GM12878 (cell line): ENCODE measurements at regions of chr14 and their contacts with region 1.

Region 1: GRCh38 chr14:68401855-68402254 is 391.0 kb downstream of the ZFP36L1 start:
- DNase-seq: peak; percentile 96
- ATAC-seq: peak; percentile 57
- H3K4me3 ChIP-seq: no peak overlapping the region
- H3K27ac ChIP-seq: peak overlapping the region; percentile 100
- H3K4me1 ChIP-seq: peaks cover 66% of the 10 kb centered on the region
- H3K27me3 ChIP-seq: no peaks in the 10 kb centered on the region
- CTCF ChIP-seq: no peak
- EP300 ChIP-seq: peak; percentile 94 to 99
- POLR2A ChIP-seq: no peak
- RAD21 ChIP-seq: peak; percentile 21; the same call in 1 of the 2 replicates

Region 2: DNA sequence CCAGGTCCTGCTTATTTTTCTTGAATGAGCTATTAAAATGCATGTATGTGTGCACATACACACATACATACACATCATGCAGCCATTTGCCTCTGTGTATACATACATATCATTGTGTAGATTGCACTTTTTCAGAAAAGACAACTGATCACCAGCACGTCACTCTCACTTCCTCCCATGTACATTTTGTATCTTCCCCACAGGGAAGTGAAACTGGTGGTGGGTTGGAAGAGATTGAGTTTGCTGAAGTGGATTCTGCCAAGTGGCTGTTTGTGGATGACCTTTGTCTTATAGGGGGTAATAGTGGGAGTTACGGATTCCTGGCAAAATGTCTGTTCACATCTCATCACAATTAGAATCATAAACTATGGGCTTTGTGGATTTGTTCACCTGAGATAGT is 133.7 kb before region 1 on chr14:
- CTCF ChIA-PET with region 1: interaction called, 5 read pairs
- POLR2A ChIA-PET with region 1: interaction called, 6 read pairs
- RAD21 ChIA-PET with region 1: interaction called, 12 read pairs
- SMC1A ChIA-PET with region 1: interaction called, 15 read pairs
- in situ Hi-C with region 1: no loop called
- intact Hi-C with region 1: loop called (anchors 5 kb)
- DNase-seq: peak; percentile 93
- ATAC-seq: peak; percentile 84
- H3K4me3 ChIP-seq: no peak overlapping the region
- H3K27ac ChIP-seq: peak overlapping the region; percentile 84
- H3K4me1 ChIP-seq: peaks cover 73% of the 10 kb centered on the region
- H3K27me3 ChIP-seq: no peaks in the 10 kb centered on the region
- CTCF ChIP-seq: no peak
- EP300 ChIP-seq: peak; percentile 93 to 100; a peak in 3 of 4 replicates
- POLR2A ChIP-seq: no peak
- RAD21 ChIP-seq: peak; percentile 22

Region 3: GRCh38 chr14:68312884-68313610 is 88.8 kb before region 1 on chr14:
- CTCF ChIA-PET with region 1: interaction called, 7 read pairs
- POLR2A ChIA-PET with region 1: interaction called, 25 read pairs
- RAD21 ChIA-PET with region 1: interaction called, 197 read pairs
- SMC1A ChIA-PET with region 1: interaction called, 44 read pairs
- in situ Hi-C with region 1: no loop called
- intact Hi-C with region 1: loop called (anchors 2 kb)
- DNase-seq: peak; percentile 99
- ATAC-seq: peak; percentile 89
- H3K4me3 ChIP-seq: no peak overlapping the region; the same call in 1 of the 2 replicates
- H3K27ac ChIP-seq: peak overlapping the region; percentile 91
- H3K4me1 ChIP-seq: peaks cover 64% of the 10 kb centered on the region
- H3K27me3 ChIP-seq: no peaks in the 10 kb centered on the region
- CTCF ChIP-seq: no peak
- EP300 ChIP-seq: peak; percentile 88 to 97; a peak in 3 of 4 replicates
- POLR2A ChIP-seq: peak; percentile 49; the same call in 1 of the 2 replicates
- RAD21 ChIP-seq: peak; percentile 41

Region 4: DNA sequence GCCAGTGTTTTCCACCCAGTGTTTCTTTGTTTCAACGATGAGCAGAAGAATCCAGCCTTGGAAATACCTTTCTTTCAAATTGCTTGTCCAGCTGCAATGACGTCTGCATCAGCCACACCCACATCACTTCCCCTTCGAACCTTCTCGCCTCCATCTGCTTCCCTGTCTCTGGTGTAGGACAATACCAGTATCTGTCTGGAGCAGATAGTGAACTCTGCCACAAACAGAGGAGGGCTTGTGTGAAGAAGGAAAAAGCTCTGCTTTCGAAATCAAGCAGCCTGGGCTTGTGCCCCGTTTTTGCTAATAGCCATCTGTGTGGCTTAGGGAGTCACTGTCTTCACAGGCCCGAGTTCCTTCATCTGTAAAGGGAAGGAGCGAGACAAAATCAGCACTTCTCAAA is 24.4 kb before region 1 on chr14:
- CTCF ChIA-PET with region 1: interaction called, 29 read pairs
- POLR2A ChIA-PET with region 1: interaction called, 103 read pairs
- RAD21 ChIA-PET with region 1: interaction called, 194 read pairs
- SMC1A ChIA-PET with region 1: interaction called, 181 read pairs
- in situ Hi-C with region 1: no loop called
- intact Hi-C with region 1: loop called (anchors 1 kb)
- DNase-seq: no peak
- ATAC-seq: peak; percentile 28
- H3K4me3 ChIP-seq: no peak overlapping the region
- H3K27ac ChIP-seq: peak overlapping the region; percentile 83
- H3K4me1 ChIP-seq: peaks cover 67% of the 10 kb centered on the region
- H3K27me3 ChIP-seq: no peaks in the 10 kb centered on the region
- CTCF ChIP-seq: no peak
- EP300 ChIP-seq: no peak
- POLR2A ChIP-seq: no peak
- RAD21 ChIP-seq: no peak

Region 5: GRCh38 chr14:68495101-68496039 is 93.5 kb after region 1 on chr14:
- CTCF ChIA-PET with region 1: no interaction called
- POLR2A ChIA-PET with region 1: interaction called, 3 read pairs
- RAD21 ChIA-PET with region 1: interaction called, 12 read pairs
- SMC1A ChIA-PET with region 1: interaction called, 9 read pairs
- in situ Hi-C with region 1: no loop called
- intact Hi-C with region 1: loop called (anchors 1 kb)
- DNase-seq: peak; percentile 83
- ATAC-seq: peak; percentile 92
- H3K4me3 ChIP-seq: no peak overlapping the region
- H3K27ac ChIP-seq: peak overlapping the region; percentile 68
- H3K4me1 ChIP-seq: peaks cover 24% of the 10 kb centered on the region
- H3K27me3 ChIP-seq: no peaks in the 10 kb centered on the region
- CTCF ChIP-seq: no peak
- EP300 ChIP-seq: peak; percentile 71 to 87; a peak in 2 of 4 replicates
- POLR2A ChIP-seq: no peak
- RAD21 ChIP-seq: 0 out of 2 replicates have a peak, but pooled peaks have one; percentile 8

Region 6: GRCh38 chr14:68649476-68650189 is 247.8 kb after region 1 on chr14:
- CTCF ChIA-PET with region 1: no interaction called
- POLR2A ChIA-PET with region 1: no interaction called
- RAD21 ChIA-PET with region 1: no interaction called
- SMC1A ChIA-PET with region 1: no interaction called
- in situ Hi-C with region 1: no loop called
- intact Hi-C with region 1: no loop called
- DNase-seq: no peak
- ATAC-seq: no peak
- H3K4me3 ChIP-seq: no peak overlapping the region
- H3K27ac ChIP-seq: no peak overlapping the region
- H3K4me1 ChIP-seq: no peaks in the 10 kb centered on the region
- H3K27me3 ChIP-seq: no peaks in the 10 kb centered on the region
- CTCF ChIP-seq: no peak
- EP300 ChIP-seq: no peak
- POLR2A ChIP-seq: no peak
- RAD21 ChIP-seq: no peak

Region 7: DNA sequence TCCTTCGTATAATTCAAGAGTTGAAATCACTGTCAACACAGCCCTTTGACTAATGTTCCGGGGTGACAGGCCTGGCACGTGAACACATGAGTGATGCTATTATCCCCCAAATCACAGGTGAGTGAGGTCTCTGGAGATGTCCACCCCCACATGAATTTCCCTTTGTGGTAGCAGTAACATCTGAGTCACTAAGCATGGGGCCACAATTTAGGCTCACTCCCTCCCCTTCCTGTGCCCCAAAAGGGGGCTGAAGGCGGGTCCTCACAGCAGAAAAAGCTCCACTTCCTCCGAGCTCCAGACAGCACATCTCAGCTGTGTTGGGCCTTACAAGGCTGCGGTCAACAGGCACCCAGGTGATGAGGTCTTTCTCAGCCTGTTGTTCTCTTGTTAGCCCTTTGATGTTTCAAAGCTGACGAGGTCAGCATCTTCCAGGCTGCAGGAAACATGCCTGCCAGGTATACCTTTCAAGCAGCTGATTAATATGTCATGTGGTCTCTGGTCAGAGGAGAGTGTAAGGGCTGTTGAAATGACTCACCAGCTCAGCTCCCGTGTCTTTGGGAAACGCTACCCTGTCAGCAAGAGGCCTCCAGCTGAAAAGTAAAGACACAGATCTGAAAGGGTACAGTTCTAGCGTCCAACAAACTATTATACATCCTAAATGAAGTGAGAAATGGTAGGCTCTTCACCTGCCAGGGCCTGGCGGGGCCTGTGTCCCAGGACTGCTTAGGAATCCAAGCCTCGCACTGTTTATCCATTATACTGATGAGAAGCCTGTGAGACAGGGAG is 283.8 kb after region 1 on chr14:
- CTCF ChIA-PET with region 1: interaction called, 4 read pairs
- POLR2A ChIA-PET with region 1: no interaction called
- RAD21 ChIA-PET with region 1: interaction called, 23 read pairs
- SMC1A ChIA-PET with region 1: interaction called, 10 read pairs
- in situ Hi-C with region 1: no loop called
- intact Hi-C with region 1: loop called (anchors 2 kb)
- DNase-seq: peak; percentile 89
- ATAC-seq: peak; percentile 90
- H3K4me3 ChIP-seq: no peak overlapping the region
- H3K27ac ChIP-seq: peak overlapping the region; percentile 67
- H3K4me1 ChIP-seq: peaks cover 48% of the 10 kb centered on the region
- H3K27me3 ChIP-seq: no peaks in the 10 kb centered on the region
- CTCF ChIP-seq: no peak
- EP300 ChIP-seq: peak in 1 of 2 experiments; percentile 85; a peak in 3 of 4 replicates
- POLR2A ChIP-seq: peak; percentile 62
- RAD21 ChIP-seq: 0 out of 2 replicates have a peak, but pooled peaks have one; percentile 0

Region 8: DNA sequence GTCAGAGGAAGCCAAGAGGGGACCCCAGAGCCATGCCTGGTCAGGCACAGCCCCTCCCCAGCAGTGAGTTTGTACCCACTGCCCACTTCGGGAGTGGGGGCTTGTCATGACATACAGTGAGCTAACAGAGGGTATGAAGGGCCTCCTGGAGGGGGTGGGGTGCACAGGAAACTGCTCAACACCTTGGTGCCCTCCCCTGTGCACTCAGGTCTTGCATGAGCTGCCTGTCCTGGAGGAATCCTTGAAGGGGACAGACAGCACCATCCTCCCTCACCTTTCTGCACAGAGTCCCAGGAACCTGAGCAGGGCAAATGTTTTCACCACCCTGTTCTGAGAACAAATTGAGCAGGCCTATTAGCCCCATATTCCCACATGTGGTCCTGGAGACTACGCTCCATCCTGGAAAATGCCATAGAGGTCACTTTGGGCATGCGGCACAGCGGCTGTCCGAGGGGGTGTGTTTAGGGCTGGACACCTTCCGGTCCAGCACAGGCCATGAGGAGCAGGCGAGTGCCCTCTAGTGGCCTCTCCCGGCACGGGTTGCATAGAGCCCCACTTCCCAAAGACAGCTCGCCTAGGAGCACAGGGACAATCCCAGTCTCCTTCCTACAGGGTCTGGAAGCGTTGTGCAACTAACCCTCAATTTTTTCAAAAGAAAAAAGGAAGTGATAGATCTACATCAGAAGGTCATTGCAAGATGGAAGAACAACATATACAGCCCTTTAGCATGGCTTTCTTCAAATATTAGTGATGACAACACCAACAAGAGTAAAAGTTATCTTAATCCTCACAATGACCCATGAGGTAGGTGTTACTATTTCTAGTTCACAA is 422.9 kb after region 1 on chr14:
- CTCF ChIA-PET with region 1: interaction called, 5 read pairs
- POLR2A ChIA-PET with region 1: interaction called, 8 read pairs
- RAD21 ChIA-PET with region 1: interaction called, 101 read pairs
- SMC1A ChIA-PET with region 1: interaction called, 25 read pairs
- in situ Hi-C with region 1: no loop called
- intact Hi-C with region 1: no loop called
- DNase-seq: no peak
- ATAC-seq: peak; percentile 10; the same call in 1 of the 3 replicates
- H3K4me3 ChIP-seq: no peak overlapping the region
- H3K27ac ChIP-seq: no peak overlapping the region; the same call in 1 of the 2 replicates
- H3K4me1 ChIP-seq: peaks cover 50% of the 10 kb centered on the region
- H3K27me3 ChIP-seq: no peaks in the 10 kb centered on the region
- CTCF ChIP-seq: peak; percentile 90 to 93 (median 90)
- EP300 ChIP-seq: no peak
- POLR2A ChIP-seq: no peak
- RAD21 ChIP-seq: peak; percentile 64; the same call in 1 of the 2 replicates